Posterior vena cava (tissue), 2 donors: ENCODE measurements at regions of chrX and their contacts with region 1.

Region 1: GRCh38 chrX:111896148-111896547 is 20.2 kb downstream of the TRPC5OS start:
- DNase-seq: no peak

Region 2: DNA sequence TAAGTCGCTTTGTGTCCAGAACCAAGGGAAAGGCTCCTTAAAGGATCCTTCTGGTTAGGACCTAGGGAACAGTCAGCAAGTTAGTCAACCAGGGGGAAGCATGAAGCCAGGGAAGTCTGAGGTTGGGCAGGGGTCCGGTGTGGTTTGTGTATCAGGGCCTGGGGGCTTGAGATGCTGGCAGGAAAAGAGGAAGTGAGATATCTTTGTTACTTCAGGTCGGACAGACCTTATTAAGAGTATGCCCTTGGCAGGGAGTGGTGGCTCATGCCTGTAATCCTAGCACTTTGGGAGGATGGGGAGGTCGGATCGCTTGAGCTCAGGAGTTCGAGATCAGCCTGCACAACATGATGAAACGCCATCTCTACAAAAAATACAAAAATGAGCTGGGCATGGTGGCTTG is 72.4 kb before region 1 on chrX:
- intact Hi-C with region 1: loop called in 1 of 2 experiments (anchors 2 kb)
- DNase-seq: no peak